Aorta (tissue), 5 donors: ENCODE measurements at regions of chr3 and their contacts with region 1.

Region 1: GRCh38 chr3:150371741-150372254 is 36.3 kb upstream of the TSC22D2 start:
- DNase-seq: no peak
- ATAC-seq: peak; percentile 93
- H3K4me3 ChIP-seq: peak overlapping the region in 1 of 2 donors; percentile 34
- H3K27ac ChIP-seq: peak overlapping the region; percentile 82 to 84
- H3K4me1 ChIP-seq: no peaks in the 10 kb centered on the region
- H3K27me3 ChIP-seq: no peaks in the 10 kb centered on the region

Region 2: GRCh38 chr3:150348500-150348899 is 23.3 kb before region 1 on chr3:
- intact Hi-C with region 1: loop called in 1 of 2 experiments (anchors 1 kb)
- DNase-seq: no peak
- ATAC-seq: peak; percentile 84
- H3K4me3 ChIP-seq: no peak overlapping the region
- H3K27ac ChIP-seq: peak overlapping the region; percentile 8 to 79
- H3K4me1 ChIP-seq: peaks cover 3 to 12% of the 10 kb centered on the region in 2 donors
- H3K27me3 ChIP-seq: no peaks in the 10 kb centered on the region

Region 3: GRCh38 chr3:150783920-150784746 is 412.3 kb after region 1 on chr3:
- intact Hi-C with region 1: no loop called
- DNase-seq: no peak
- ATAC-seq: no peak
- H3K4me3 ChIP-seq: no peak overlapping the region
- H3K27ac ChIP-seq: no peak overlapping the region
- H3K4me1 ChIP-seq: no peaks in the 10 kb centered on the region
- H3K27me3 ChIP-seq: no peaks in the 10 kb centered on the region